CD8-positive, alpha-beta T cell (primary cell): ENCODE measurements at regions of chr1 and their contacts with region 1.

Region 1: DNA sequence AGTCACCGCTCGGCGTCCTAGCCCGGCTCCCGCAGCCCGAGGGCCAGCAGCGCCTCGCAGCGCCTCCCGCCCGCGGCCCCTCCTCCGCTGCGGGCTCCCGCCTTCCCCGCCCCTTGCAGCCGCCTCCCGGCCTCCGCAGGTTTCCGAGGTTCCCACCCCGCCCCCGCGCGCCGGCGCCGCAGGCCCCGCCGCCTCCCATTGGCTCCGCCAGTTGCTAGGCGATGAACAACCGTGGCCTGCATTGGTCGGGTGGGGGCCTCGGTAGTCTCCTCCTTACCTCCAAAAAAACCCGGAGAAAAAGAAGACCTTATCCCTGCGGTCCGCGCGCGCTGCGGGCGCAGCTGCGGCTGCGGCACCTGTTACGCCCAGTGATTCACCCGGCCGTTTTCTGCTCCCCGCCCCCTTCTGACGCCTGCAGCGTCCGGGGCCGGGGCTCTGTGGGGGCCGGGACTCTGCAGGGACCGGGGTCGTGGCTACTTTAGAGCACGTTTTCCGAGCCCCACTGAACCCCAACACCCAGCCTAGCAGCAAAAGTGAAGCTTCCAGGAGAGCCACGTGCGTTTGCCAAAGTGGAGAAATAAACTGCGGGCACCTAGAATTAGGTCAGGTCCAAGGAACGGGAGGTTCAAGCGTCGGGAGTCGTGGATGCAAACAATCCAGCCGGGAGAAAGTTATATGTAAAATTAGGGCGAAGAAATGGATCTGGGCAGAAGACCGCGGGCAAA is at the start of gene SSX2IP:
- DNase-seq: peak; percentile 98 to 100 (median 99)
- ATAC-seq: peak; percentile 81
- H3K4me3 ChIP-seq: peak within 1 kb of the TSS; percentile 83 to 87
- H3K4me3 Mint-ChIP-seq: peak within 1 kb of the TSS; percentile 87
- H3K27ac ChIP-seq: peak within 1 kb of the TSS; percentile 85 to 88
- H3K27ac Mint-ChIP-seq: peak within 1 kb of the TSS; percentile 97
- H3K4me1 ChIP-seq: peaks cover 38% of the 10 kb centered on the region
- H3K4me1 Mint-ChIP-seq: peaks cover 59% of the 10 kb centered on the region
- H3K27me3 ChIP-seq: no peaks in the 10 kb centered on the region
- H3K27me3 Mint-ChIP-seq: no peaks in the 10 kb centered on the region
- CTCF ChIP-seq: no peak
- total RNA-seq, gene SSX2IP: 11.4 to 12.3 TPM

Region 2: GRCh38 chr1:84156210-84156621 is 534.3 kb before region 1 on chr1:
- CTCF ChIA-PET with region 1: no interaction called
- POLR2A ChIA-PET with region 1: no interaction called
- intact Hi-C with region 1: loop called in 1 of 2 experiments (anchors 5 kb)
- DNase-seq: peak in 1 of 9 experiments; percentile 56
- ATAC-seq: peak; percentile 64
- H3K4me3 ChIP-seq: no peak overlapping the region
- H3K4me3 Mint-ChIP-seq: peak overlapping the region; percentile 19
- H3K27ac ChIP-seq: peak overlapping the region in 1 of 2 experiments; percentile 17
- H3K27ac Mint-ChIP-seq: peak overlapping the region; percentile 60
- H3K4me1 ChIP-seq: peaks cover 72% of the 10 kb centered on the region
- H3K4me1 Mint-ChIP-seq: peaks cover 93% of the 10 kb centered on the region
- H3K27me3 ChIP-seq: no peaks in the 10 kb centered on the region
- H3K27me3 Mint-ChIP-seq: no peaks in the 10 kb centered on the region
- CTCF ChIP-seq: no peak

Region 3: GRCh38 chr1:84166797-84167196 is 523.8 kb before region 1 on chr1:
- CTCF ChIA-PET with region 1: no interaction called
- POLR2A ChIA-PET with region 1: no interaction called
- intact Hi-C with region 1: no loop called
- DNase-seq: peak in 1 of 9 experiments; percentile 38
- ATAC-seq: no peak
- H3K4me3 ChIP-seq: no peak overlapping the region
- H3K4me3 Mint-ChIP-seq: peak overlapping the region; percentile 59
- H3K27ac ChIP-seq: peak overlapping the region in 1 of 2 experiments; percentile 65
- H3K27ac Mint-ChIP-seq: peak overlapping the region; percentile 56
- H3K4me1 ChIP-seq: peaks cover 63% of the 10 kb centered on the region
- H3K4me1 Mint-ChIP-seq: peaks cover 86% of the 10 kb centered on the region
- H3K27me3 ChIP-seq: no peaks in the 10 kb centered on the region
- H3K27me3 Mint-ChIP-seq: no peaks in the 10 kb centered on the region
- CTCF ChIP-seq: no peak

Region 4: GRCh38 chr1:84478876-84479868 is 211.4 kb before region 1 on chr1 and contains the start of gene RPF1:
- CTCF ChIA-PET with region 1: interaction called, 4 read pairs
- POLR2A ChIA-PET with region 1: interaction called, 3 read pairs
- intact Hi-C with region 1: loop called (anchors 1 to 2 kb)
- DNase-seq: peak; percentile 55 to 90 (median 82)
- ATAC-seq: peak; percentile 96
- H3K4me3 ChIP-seq: peak within 1 kb of the TSS; percentile 81 to 83
- H3K4me3 Mint-ChIP-seq: peak within 1 kb of the TSS; percentile 99
- H3K27ac ChIP-seq: peak within 1 kb of the TSS; percentile 88
- H3K27ac Mint-ChIP-seq: peak within 1 kb of the TSS; percentile 99
- H3K4me1 ChIP-seq: peaks cover 31% of the 10 kb centered on the region
- H3K4me1 Mint-ChIP-seq: peaks cover 42% of the 10 kb centered on the region
- H3K27me3 ChIP-seq: peaks cover 0 to 10% of the 10 kb centered on the region in 2 experiments
- H3K27me3 Mint-ChIP-seq: peaks cover 26% of the 10 kb centered on the region
- CTCF ChIP-seq: no peak
- total RNA-seq, gene RPF1: 84.2 to 85.3 TPM

Region 5: DNA sequence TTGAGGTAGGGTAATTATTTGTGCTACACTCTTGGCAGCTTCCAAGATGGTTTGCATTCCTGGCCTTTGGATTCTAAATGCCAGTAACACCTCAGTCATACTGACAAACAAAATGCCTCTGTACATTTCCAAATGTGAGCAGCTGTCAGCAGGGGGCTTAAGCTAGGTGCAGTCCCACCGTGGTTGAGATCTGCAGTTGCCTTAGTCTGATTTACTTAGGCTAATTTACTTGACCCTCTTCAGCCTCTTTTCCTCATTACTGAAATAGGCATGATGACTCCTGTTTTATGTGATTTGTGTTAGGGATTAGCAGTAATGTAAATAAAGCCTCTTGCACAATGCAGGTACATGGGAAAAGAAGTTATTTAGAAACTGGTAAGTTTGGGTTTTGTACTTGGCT is 197.8 kb before region 1 on chr1:
- CTCF ChIA-PET with region 1: no interaction called
- POLR2A ChIA-PET with region 1: no interaction called
- intact Hi-C with region 1: no loop called
- DNase-seq: no peak
- ATAC-seq: no peak
- H3K4me3 ChIP-seq: no peak overlapping the region
- H3K4me3 Mint-ChIP-seq: no peak overlapping the region
- H3K27ac ChIP-seq: no peak overlapping the region
- H3K27ac Mint-ChIP-seq: no peak overlapping the region
- H3K4me1 ChIP-seq: peaks cover 7% of the 10 kb centered on the region
- H3K4me1 Mint-ChIP-seq: peaks cover 23% of the 10 kb centered on the region
- H3K27me3 ChIP-seq: no peaks in the 10 kb centered on the region
- H3K27me3 Mint-ChIP-seq: no peaks in the 10 kb centered on the region
- CTCF ChIP-seq: no peak

Region 6: GRCh38 chr1:84668185-84668584 is 22.4 kb before region 1 on chr1:
- CTCF ChIA-PET with region 1: no interaction called
- POLR2A ChIA-PET with region 1: no interaction called
- intact Hi-C with region 1: loop called in 1 of 2 experiments (anchors 2 kb)
- DNase-seq: peak in 2 of 9 experiments; percentile 33 to 48
- ATAC-seq: peak; percentile 36
- H3K4me3 ChIP-seq: no peak overlapping the region
- H3K4me3 Mint-ChIP-seq: no peak overlapping the region
- H3K27ac ChIP-seq: no peak overlapping the region
- H3K27ac Mint-ChIP-seq: no peak overlapping the region
- H3K4me1 ChIP-seq: no peaks in the 10 kb centered on the region
- H3K4me1 Mint-ChIP-seq: peaks cover 9% of the 10 kb centered on the region
- H3K27me3 ChIP-seq: no peaks in the 10 kb centered on the region
- H3K27me3 Mint-ChIP-seq: no peaks in the 10 kb centered on the region
- CTCF ChIP-seq: no peak

Region 7: DNA sequence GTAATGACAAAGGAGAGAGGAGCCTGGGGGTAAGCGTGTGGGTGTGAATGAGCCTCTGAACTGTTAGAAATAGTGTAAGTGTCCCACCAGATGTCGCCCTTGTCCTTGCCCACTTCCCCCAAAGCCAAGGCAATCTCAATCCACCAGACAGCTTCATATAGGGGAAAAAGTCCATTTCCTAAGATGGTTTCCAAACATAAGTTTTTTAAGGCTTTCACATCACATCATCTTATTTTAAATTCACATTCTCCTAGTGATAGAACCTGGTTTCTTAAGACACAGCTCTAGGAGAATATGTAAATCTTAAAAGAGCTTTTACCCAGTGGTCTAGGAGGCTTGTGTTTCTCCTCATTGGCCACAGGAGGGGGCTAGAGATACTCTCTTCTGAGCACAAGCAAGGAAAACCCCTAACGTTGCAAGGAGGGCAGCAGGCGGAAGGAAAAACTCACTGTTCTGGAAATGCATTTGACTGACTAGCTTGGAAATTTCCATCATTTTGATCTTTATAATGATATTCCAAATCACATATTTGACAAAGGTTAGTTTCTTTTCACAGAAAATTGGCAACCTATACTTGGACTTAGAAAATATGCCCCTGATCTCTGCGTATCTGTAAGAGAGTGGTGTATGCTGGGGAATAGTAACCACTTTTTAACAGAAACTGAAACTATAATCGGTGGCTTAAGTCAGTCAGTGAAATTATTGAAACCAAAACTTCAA is 254.4 kb after region 1 on chr1:
- CTCF ChIA-PET with region 1: no interaction called
- POLR2A ChIA-PET with region 1: no interaction called
- intact Hi-C with region 1: loop called in 1 of 2 experiments (anchors 5 kb)
- DNase-seq: peak; percentile 22 to 97 (median 73)
- ATAC-seq: peak; percentile 91
- H3K4me3 ChIP-seq: peak overlapping the region; percentile 54 to 75
- H3K4me3 Mint-ChIP-seq: peak overlapping the region; percentile 89
- H3K27ac ChIP-seq: peak overlapping the region; percentile 82 to 85
- H3K27ac Mint-ChIP-seq: peak overlapping the region; percentile 98
- H3K4me1 ChIP-seq: peaks cover 4% of the 10 kb centered on the region
- H3K4me1 Mint-ChIP-seq: peaks cover 16% of the 10 kb centered on the region
- H3K27me3 ChIP-seq: no peaks in the 10 kb centered on the region
- H3K27me3 Mint-ChIP-seq: no peaks in the 10 kb centered on the region
- CTCF ChIP-seq: peak; percentile 98

Region 8: GRCh38 chr1:85276215-85276977 is 585.8 kb after region 1 on chr1 and contains the start of gene BCL10:
- CTCF ChIA-PET with region 1: no interaction called
- POLR2A ChIA-PET with region 1: no interaction called
- intact Hi-C with region 1: loop called in 1 of 2 experiments (anchors 1 kb)
- DNase-seq: peak; percentile 95 to 99 (median 98)
- ATAC-seq: peak; percentile 94
- H3K4me3 ChIP-seq: peak within 1 kb of the TSS; percentile 72 to 80
- H3K4me3 Mint-ChIP-seq: peak within 1 kb of the TSS; percentile 86
- H3K27ac ChIP-seq: peak within 1 kb of the TSS; percentile 92 to 95
- H3K27ac Mint-ChIP-seq: peak within 1 kb of the TSS; percentile 94
- H3K4me1 ChIP-seq: peaks cover 35% of the 10 kb centered on the region
- H3K4me1 Mint-ChIP-seq: peaks cover 48% of the 10 kb centered on the region
- H3K27me3 ChIP-seq: no peaks in the 10 kb centered on the region
- H3K27me3 Mint-ChIP-seq: no peaks in the 10 kb centered on the region
- CTCF ChIP-seq: no peak
- total RNA-seq, gene BCL10: 48.2 to 51.7 TPM